PC-3 (cell line): ENCODE measurements at regions of chr3 and their contacts with region 1.

Region 1: DNA sequence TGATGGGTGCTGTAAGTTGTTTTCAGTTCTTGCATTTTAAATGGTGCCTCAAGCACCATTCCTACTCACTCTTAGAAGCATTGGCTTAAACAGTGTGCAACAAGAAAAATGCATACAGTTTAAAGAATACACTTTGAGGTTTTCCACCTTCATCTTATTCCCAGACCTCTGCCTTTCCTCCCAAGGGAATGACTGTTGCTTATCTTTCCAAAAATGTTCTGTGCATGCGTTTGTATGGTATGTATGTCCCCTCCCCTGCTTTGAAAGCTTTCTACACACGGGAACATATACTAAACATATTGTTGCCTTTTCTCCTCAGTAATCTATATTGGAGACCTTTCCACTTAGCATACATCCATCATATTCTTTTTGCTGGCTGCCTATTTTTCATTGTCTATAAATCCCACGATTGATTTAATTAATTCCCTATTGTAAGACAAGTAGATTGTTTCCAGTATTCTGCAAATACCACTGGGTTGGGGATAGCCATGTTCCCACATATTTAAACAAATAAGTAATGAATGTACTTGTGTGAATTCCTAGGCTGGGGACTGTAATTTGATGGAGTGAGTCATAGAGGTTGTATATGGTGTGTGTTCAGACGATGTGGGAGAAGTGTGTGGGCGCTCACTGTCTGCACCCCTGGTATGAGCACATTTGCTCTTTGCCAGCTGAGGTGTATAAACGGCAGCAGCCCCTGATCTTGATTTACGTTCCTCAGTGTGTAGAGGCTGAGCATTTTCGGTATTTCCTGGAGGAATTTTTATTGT is 5.8 kb downstream of the TRAK1 start:
- DNase-seq: no peak
- ATAC-seq: peak; percentile 63
- H3K4me3 ChIP-seq: no peak overlapping the region
- H3K27ac ChIP-seq: no peak overlapping the region
- H3K4me1 ChIP-seq: 0 out of 2 replicates have a peak, but pooled peaks cover 5% of the 10 kb centered on the region
- H3K27me3 ChIP-seq: no peaks in the 10 kb centered on the region
- CTCF ChIP-seq: no peak

Region 2: DNA sequence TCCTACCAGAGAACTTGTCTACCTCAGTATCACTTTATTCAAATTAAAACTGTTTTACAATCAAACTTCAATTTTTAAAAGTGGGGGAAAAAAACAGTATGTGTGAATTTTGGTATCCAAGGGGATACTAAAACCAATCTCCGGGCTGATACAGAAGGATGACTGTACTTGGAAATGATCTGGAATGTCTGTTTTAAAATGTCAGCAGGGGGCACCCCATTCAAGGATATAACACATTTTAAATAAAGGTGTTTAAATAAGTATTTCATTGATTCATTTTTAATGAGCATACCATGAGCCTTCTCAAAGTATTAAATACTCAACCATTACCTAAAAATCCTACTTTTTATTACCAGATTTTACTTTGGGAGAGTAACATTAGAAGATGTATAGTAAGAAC is 203.0 kb before region 1 on chr3:
- CTCF ChIA-PET with region 1: no interaction called
- POLR2A ChIA-PET with region 1: no interaction called
- intact Hi-C with region 1: loop called (anchors 1 kb)
- DNase-seq: peak; percentile 71
- ATAC-seq: peak; percentile 69
- H3K4me3 ChIP-seq: no peak overlapping the region
- H3K27ac ChIP-seq: no peak overlapping the region
- H3K4me1 ChIP-seq: no peaks in the 10 kb centered on the region
- H3K27me3 ChIP-seq: no peaks in the 10 kb centered on the region
- CTCF ChIP-seq: peak; percentile 77

Region 3: GRCh38 chr3:41961750-41962679 is 135.0 kb before region 1 on chr3 and contains the start of gene ULK4:
- CTCF ChIA-PET with region 1: interaction called, 3 read pairs
- POLR2A ChIA-PET with region 1: no interaction called
- intact Hi-C with region 1: loop called (anchors 1 kb)
- DNase-seq: peak; percentile 99
- ATAC-seq: peak; percentile 90
- H3K4me3 ChIP-seq: peak within 1 kb of the TSS; percentile 87
- H3K27ac ChIP-seq: peak within 1 kb of the TSS; percentile 15
- H3K4me1 ChIP-seq: peaks cover 6% of the 10 kb centered on the region; the same call in 1 of the 2 replicates
- H3K27me3 ChIP-seq: no peaks in the 10 kb centered on the region
- CTCF ChIP-seq: no peak
- total RNA-seq, gene ULK4: 4.8 and 10.0 TPM in 2 replicates

Region 4: DNA sequence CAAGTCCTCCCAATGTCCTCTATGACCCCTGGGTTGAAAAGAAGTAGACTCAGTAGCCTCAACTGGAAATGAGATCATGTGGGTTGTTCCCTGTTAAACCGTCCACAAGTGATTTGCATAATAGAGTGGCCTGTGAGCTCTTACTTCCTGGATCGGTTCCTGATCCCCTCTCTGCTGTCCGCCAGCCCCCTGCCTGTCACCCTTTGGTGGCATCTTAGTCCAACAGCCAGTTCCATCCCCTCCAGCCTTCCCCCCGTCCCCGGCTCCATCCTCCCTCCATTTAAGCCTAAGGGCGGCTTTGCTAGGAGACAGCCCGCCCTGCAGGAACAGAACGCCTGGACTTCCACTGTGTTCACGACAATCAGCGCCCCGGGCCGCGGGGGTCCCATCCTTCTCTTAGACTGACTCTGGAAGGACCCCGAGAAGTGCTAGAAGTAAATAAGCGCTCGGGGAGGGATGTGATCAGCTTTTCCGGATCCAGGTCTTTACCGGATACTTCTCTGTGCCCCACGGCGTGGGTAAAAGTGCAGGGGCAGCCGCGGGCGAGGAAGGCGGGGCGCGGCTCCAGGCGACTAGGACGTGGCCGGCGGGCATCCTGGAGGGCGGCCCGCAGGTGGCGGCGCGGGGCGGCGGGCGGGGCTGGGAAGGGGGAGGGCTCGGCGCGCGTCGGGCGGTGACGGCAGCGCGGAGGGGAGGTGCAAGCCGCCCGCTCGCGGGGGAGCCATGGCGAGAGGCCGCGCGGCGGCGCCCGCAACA is 83.9 kb before region 1 on chr3:
- CTCF ChIA-PET with region 1: no interaction called
- POLR2A ChIA-PET with region 1: no interaction called
- intact Hi-C with region 1: loop called (anchors 5 kb)
- DNase-seq: peak; percentile 55
- ATAC-seq: peak; percentile 83
- H3K4me3 ChIP-seq: peak overlapping the region; percentile 77
- H3K27ac ChIP-seq: no peak overlapping the region
- H3K4me1 ChIP-seq: peaks cover 15% of the 10 kb centered on the region
- H3K27me3 ChIP-seq: no peaks in the 10 kb centered on the region
- CTCF ChIP-seq: no peak

Region 5: GRCh38 chr3:42071904-42072592 is 24.9 kb before region 1 on chr3:
- CTCF ChIA-PET with region 1: interaction called, 5 read pairs
- POLR2A ChIA-PET with region 1: no interaction called
- intact Hi-C with region 1: loop called (anchors 1 kb)
- DNase-seq: peak; percentile 97
- ATAC-seq: peak; percentile 94
- H3K4me3 ChIP-seq: peak overlapping the region; percentile 46
- H3K27ac ChIP-seq: peak overlapping the region; percentile 74
- H3K4me1 ChIP-seq: peaks cover 29% of the 10 kb centered on the region
- H3K27me3 ChIP-seq: no peaks in the 10 kb centered on the region
- CTCF ChIP-seq: 0 out of 2 replicates have a peak, but pooled peaks have one; percentile 16

Region 6: GRCh38 chr3:42080452-42080891 is 16.5 kb before region 1 on chr3:
- CTCF ChIA-PET with region 1: interaction called, 3 read pairs
- POLR2A ChIA-PET with region 1: interaction called, 4 read pairs
- intact Hi-C with region 1: loop called (anchors 2 kb)
- DNase-seq: peak; percentile 95
- ATAC-seq: peak; percentile 88
- H3K4me3 ChIP-seq: peak overlapping the region; percentile 18; the same call in 1 of the 2 replicates
- H3K27ac ChIP-seq: peak overlapping the region; percentile 85
- H3K4me1 ChIP-seq: peaks cover 42% of the 10 kb centered on the region
- H3K27me3 ChIP-seq: no peaks in the 10 kb centered on the region
- CTCF ChIP-seq: no peak

Region 7: DNA sequence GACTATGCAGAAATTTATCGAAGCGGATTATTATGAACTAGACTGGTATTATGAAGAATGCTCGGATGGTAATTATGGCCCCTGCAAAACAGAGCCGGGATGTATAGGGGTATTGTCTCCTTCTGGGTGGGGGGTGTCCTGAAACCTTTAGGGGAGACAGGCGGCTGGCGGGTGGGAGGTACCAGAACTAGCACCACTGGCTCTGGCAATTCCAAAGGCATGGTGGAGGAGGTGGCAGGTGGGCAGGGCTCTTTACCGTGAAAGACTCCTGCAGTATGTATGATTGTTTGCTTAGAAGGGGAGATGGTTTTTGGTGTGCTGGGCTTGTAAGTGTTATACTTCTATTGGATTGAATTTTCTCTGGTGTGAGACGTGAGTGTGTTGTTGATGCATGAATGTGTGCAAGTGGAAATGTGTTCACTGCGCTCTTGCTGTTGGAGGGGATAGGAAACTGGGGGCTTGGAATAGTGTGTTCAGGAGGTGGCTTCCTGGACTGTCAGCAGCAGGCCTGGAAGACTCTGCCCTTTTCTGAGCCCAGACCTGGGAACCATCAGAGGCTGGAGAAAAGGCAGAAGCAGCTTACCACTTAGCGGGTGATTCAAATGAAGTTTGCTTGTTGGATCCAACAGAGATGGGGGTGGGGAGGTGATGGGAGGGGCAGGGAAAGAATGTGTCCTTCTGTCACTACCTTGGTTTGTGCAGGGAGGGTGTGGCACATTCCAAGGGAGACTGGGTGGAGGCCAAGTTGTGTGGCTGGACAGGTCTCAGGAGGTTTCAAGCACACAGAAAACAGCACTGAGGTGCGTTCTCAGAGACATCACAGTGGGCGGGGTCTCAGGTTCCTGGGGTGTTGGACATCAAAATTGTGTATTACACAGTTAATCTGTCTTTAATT is 52.8 kb after region 1 on chr3:
- CTCF ChIA-PET with region 1: no interaction called
- POLR2A ChIA-PET with region 1: interaction called, 41 read pairs
- intact Hi-C with region 1: no loop called
- DNase-seq: peak; percentile 96
- ATAC-seq: peak; percentile 77
- H3K4me3 ChIP-seq: peak overlapping the region; percentile 27; the same call in 1 of the 2 replicates
- H3K27ac ChIP-seq: peak overlapping the region; percentile 85
- H3K4me1 ChIP-seq: peaks cover 41% of the 10 kb centered on the region
- H3K27me3 ChIP-seq: no peaks in the 10 kb centered on the region
- CTCF ChIP-seq: no peak